HEK293 (cell line): ENCODE measurements at regions of chr6 and their contacts with region 1.

Region 1: DNA sequence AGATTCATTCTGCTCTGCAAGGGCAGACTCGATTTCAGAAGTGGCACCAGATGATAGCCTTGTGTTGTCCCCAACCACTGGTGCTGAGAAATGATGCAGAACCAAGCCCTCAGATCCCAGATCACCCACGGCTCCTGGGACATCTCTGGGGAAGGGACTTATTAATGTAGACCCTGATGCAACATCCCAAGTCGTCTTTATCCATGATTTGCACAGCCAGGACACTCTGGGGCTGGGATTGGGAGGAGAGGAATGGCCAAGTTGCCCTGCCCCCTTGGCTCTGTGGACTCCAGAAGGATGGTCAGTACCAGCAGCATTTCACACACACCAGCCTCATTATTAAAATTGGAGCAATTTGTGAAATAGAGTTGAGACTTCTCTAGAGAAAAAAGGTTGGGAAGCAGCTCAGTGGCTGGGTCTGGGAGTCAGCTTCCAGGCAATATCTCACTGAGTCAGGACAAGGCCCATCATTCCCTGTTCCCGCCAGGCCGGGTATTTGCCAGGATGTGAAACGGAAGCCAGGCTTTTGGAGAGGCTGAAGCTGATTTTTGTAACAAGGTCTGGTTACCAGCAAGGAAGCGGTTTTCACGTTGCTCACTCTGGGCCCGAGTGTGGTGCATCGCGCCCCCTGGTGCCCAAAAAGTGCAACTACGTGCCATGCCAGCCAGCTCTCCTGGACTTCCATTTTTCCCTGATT is 67.4 kb downstream of the ZBTB2 start:
- H3K4me3 ChIP-seq: no peak overlapping the region
- H3K27ac ChIP-seq: no peak overlapping the region
- H3K4me1 ChIP-seq: no peaks in the 10 kb centered on the region
- CTCF ChIP-seq: peak; percentile 91

Region 2: GRCh38 chr6:150813319-150813992 is 510.5 kb before region 1 on chr6:
- CTCF ChIA-PET with region 1: interaction called, 15 read pairs
- POLR2A ChIA-PET with region 1: interaction called, 3 read pairs
- H3K4me3 ChIP-seq: no peak overlapping the region
- H3K27ac ChIP-seq: no peak overlapping the region; the same call in 1 of the 2 replicates
- H3K4me1 ChIP-seq: peaks cover 11% of the 10 kb centered on the region; the same call in 1 of the 2 replicates
- CTCF ChIP-seq: no peak

Region 3: DNA sequence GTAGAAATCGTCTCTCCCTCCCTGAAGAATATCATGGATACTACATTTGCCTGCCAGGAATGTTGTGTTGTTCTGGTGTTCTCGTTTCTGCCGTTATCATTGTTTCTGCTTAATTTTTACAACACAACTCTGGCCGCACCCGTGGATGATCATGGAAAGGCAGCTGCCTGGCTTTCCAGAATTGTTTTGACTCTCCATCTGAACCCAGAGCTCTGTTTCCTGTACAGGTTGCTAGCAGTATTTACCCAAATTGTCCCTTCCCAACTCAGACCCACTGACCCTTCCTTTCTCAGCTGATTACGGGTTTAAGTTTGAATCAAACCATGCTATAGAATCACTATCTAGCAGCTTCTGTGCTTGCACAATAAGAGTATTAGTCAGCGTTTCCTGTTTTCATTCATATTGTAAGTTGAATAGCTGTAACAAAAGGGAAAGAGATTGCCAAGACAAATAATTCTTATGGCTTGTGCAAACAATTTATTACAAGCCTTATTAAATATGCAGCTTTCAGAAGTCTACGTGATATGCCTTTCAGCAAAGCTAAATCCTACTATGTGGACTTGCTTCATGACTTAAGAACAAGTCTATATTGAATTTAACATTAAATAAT is 319.4 kb before region 1 on chr6:
- CTCF ChIA-PET with region 1: interaction called, 512 read pairs
- POLR2A ChIA-PET with region 1: no interaction called
- H3K4me3 ChIP-seq: no peak overlapping the region
- H3K27ac ChIP-seq: no peak overlapping the region
- H3K4me1 ChIP-seq: peaks cover 10% of the 10 kb centered on the region
- CTCF ChIP-seq: no peak

Region 4: DNA sequence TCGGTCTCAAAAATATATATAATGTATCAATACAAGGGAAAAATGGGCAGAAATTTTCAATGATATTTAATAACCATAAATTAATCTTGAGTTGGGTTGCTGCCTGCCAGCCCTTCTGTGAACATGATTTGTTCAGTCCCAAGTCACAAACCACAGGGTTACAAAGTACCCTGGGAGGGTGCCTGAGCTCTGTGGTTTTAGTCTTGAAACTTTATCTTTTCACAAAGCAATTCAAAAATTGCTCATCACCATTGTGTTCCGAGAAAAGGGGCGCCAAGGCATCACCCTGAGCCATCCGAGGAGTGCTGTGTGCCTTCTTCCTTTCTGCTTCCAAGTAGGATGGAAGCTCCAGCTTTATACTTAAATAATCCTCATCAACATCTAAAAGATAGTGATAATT is 225.8 kb before region 1 on chr6:
- CTCF ChIA-PET with region 1: interaction called, 14 read pairs
- POLR2A ChIA-PET with region 1: no interaction called
- H3K4me3 ChIP-seq: no peak overlapping the region
- H3K27ac ChIP-seq: no peak overlapping the region
- H3K4me1 ChIP-seq: no peaks in the 10 kb centered on the region
- CTCF ChIP-seq: no peak

Region 5: GRCh38 chr6:151209071-151209831 is 114.7 kb before region 1 on chr6:
- CTCF ChIA-PET with region 1: interaction called, 12 read pairs
- POLR2A ChIA-PET with region 1: no interaction called
- H3K4me3 ChIP-seq: peak overlapping the region; percentile 27
- H3K27ac ChIP-seq: no peak overlapping the region
- H3K4me1 ChIP-seq: no peaks in the 10 kb centered on the region; the same call in 1 of the 2 replicates
- CTCF ChIP-seq: no peak

Region 6: DNA sequence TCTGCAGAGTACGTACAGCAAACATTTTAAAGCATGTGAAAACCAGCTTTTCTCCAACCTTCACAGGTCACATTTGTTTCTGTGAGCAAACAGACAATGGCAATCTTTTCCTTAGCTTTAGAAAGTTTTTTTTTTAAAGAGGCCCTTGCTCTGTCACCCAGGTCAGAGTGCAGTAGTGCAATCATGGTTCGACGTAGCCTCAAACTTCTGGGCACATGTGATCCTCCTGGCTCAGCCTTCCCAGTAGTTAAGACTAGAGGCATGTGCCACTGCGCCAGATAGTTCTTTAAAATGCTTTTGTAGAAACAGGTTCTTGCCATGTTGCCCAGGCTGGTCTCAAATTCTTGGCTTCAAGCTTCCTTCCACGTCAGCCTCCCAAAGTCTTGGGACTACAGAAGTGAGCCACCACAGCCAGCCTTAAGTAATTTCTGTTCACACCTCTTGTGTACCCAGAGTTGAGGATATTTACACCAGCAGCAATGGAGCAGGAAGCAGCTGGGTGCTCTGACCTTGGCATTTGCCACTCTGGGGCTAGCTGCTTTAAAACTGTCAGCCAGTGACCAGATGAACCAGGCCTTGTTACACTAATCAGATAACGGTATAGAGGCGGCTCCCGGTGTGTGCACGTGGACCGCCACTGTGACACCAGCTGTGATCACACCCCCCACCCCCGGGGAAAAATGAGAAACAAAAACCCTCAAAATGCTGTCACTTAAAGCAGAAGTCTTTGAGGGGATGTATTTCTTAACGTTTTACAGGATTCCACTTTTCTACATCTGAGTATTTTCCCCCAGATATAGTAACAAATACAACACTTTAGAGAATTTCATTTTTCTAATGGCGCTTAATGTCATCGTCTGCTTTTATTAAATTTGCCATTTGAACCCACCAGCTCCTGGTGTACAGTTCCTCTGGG is 12.8 kb before region 1 on chr6:
- CTCF ChIA-PET with region 1: interaction called, 27 read pairs
- POLR2A ChIA-PET with region 1: no interaction called
- H3K4me3 ChIP-seq: no peak overlapping the region
- H3K27ac ChIP-seq: no peak overlapping the region
- H3K4me1 ChIP-seq: no peaks in the 10 kb centered on the region
- CTCF ChIP-seq: no peak

Region 7: DNA sequence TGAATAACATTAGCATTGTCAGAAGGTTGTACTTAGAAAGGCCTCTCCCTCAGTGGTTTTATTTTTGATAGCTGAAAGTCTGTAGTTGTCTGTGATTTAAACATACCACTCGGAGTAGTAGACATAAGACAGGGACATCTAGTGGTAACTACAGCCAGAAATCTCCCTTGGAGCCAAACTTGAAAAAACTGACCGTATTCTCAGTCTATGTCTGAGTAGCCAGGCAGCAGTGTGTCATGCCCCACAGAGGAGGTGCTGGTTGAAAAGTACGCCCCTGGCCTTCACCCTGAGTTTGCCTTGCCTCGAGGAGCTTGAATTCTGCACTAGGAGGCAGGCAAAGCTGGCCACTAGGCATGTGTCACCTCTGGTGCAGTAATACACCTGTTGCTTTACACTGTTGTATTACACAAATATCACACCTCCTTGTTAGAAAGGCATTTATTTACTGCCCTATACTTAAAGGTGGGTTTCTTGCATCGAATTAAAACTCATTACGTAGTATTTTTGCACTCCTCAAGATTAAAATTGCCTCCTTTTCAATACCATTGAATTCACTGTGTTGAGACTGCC is 46.7 kb after region 1 on chr6:
- CTCF ChIA-PET with region 1: interaction called, 10 read pairs
- POLR2A ChIA-PET with region 1: no interaction called
- H3K4me3 ChIP-seq: no peak overlapping the region
- H3K27ac ChIP-seq: no peak overlapping the region
- H3K4me1 ChIP-seq: peaks cover 7% of the 10 kb centered on the region
- CTCF ChIP-seq: no peak

Region 8: GRCh38 chr6:151534576-151534975 is 210.6 kb after region 1 on chr6:
- CTCF ChIA-PET with region 1: no interaction called
- POLR2A ChIA-PET with region 1: no interaction called
- H3K4me3 ChIP-seq: no peak overlapping the region
- H3K27ac ChIP-seq: no peak overlapping the region
- H3K4me1 ChIP-seq: no peaks in the 10 kb centered on the region
- CTCF ChIP-seq: no peak